RWPE1 (cell line): ENCODE measurements at regions of chr1 and their contacts with region 1.

Region 1: DNA sequence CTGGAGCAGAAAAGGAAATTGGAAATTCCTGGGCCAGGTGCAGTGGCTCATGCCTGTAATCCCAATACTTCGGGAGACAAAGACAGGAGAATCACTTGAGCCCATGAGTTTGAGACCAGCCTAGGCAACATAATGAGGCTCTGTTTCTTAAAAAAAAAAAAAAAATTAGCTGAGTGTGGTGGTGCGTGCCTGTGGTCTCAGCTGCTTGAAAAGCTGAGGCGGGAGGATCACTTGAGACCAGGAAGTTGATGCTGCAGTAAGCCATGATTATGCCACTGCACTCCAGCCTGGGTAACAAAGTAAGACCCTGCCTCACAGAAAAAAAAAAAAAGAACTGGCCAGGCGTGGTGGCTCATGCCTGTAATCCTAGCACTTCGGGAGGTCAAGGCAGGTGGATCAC is 56.7 kb downstream of the SRSF11 start:
- DNase-seq: no peak
- H3K27ac ChIP-seq: no peak overlapping the region
- CTCF ChIP-seq: no peak

Region 2: GRCh38 chr1:70299472-70299871 is 21.6 kb after region 1 on chr1:
- CTCF ChIA-PET with region 1: no interaction called
- POLR2A ChIA-PET with region 1: interaction called, 10 read pairs
- DNase-seq: no peak
- H3K27ac ChIP-seq: no peak overlapping the region
- CTCF ChIP-seq: no peak